ENCODE measurements at regions of chr6 and their contacts with region 1.

Region 1: GRCh38 chr6:132820629-132821381 is 6.4 kb downstream of the RPS12 start:
- DNase-seq: no peak
- ATAC-seq: no peak
- H3K4me3 ChIP-seq: no peak overlapping the region
- H3K4me3 Mint-ChIP-seq: no peak overlapping the region
- H3K27ac ChIP-seq: no peak overlapping the region
- H3K27ac Mint-ChIP-seq: peak overlapping the region; percentile 52
- H3K4me1 ChIP-seq: peaks cover 18% of the 10 kb centered on the region
- H3K4me1 Mint-ChIP-seq: peaks cover 63% of the 10 kb centered on the region
- H3K27me3 ChIP-seq: no peaks in the 10 kb centered on the region
- H3K27me3 Mint-ChIP-seq: no peaks in the 10 kb centered on the region
- CTCF ChIP-seq: no peak

Region 2: GRCh38 chr6:133553652-133554051 is 732.8 kb after region 1 on chr6:
- CTCF ChIA-PET with region 1: no interaction called
- POLR2A ChIA-PET with region 1: no interaction called
- intact Hi-C with region 1: loop called in 1 of 2 experiments (anchors 10 kb)
- DNase-seq: peak in 5 of 14 experiments; percentile 3 to 50 (median 39)
- ATAC-seq: no peak
- H3K4me3 ChIP-seq: no peak overlapping the region
- H3K4me3 Mint-ChIP-seq: no peak overlapping the region
- H3K27ac ChIP-seq: no peak overlapping the region
- H3K27ac Mint-ChIP-seq: no peak overlapping the region
- H3K4me1 ChIP-seq: no peaks in the 10 kb centered on the region
- H3K4me1 Mint-ChIP-seq: no peaks in the 10 kb centered on the region
- H3K27me3 ChIP-seq: peaks cover 0 to 3% of the 10 kb centered on the region in 2 experiments
- H3K27me3 Mint-ChIP-seq: peaks cover 8% of the 10 kb centered on the region
- CTCF ChIP-seq: peak; percentile 44